Cardiac septum (tissue), 1 donor: ENCODE measurements at regions of chr4 and their contacts with region 1.

Region 1: DNA sequence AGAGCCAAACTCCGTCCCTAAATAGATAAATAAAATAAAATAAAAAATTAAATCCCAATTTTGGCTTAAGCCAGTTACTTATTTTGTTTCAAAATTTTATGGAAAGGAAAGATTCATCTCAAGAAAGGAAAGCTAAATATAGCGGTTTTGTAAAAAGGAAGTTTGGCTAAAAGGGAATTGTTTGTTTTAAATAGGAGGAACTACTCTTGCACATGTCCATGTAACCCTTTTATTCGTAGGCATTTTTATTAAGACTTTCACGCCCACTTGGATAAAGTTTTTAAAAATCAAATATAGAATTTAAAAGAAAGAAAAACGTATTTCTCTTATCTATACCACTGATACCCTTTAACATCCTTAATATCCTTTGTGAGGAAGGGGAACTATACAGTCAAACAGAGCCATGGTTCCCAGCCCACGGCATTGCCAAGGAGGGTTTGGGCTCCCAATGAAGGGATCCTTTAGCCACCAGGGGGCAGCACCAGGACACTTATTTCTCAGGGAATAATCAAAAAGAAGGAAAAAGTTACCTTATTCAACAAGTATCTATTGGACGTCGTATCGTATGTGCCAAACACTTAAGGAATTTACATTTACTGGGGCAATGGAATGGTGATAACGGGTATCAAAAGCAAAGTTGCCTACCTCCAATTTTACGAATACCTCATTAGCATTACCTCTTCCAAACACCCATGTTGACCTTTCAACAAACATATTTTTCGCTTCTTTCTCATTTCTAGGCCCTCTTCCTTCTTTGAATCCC is 27.7 kb downstream of the CDKN2AIP start:
- DNase-seq: peak; percentile 84

Region 2: GRCh38 chr4:183602557-183603027 is 130.5 kb after region 1 on chr4:
- intact Hi-C with region 1: loop called (anchors 1 kb)
- DNase-seq: no peak

Region 3: DNA sequence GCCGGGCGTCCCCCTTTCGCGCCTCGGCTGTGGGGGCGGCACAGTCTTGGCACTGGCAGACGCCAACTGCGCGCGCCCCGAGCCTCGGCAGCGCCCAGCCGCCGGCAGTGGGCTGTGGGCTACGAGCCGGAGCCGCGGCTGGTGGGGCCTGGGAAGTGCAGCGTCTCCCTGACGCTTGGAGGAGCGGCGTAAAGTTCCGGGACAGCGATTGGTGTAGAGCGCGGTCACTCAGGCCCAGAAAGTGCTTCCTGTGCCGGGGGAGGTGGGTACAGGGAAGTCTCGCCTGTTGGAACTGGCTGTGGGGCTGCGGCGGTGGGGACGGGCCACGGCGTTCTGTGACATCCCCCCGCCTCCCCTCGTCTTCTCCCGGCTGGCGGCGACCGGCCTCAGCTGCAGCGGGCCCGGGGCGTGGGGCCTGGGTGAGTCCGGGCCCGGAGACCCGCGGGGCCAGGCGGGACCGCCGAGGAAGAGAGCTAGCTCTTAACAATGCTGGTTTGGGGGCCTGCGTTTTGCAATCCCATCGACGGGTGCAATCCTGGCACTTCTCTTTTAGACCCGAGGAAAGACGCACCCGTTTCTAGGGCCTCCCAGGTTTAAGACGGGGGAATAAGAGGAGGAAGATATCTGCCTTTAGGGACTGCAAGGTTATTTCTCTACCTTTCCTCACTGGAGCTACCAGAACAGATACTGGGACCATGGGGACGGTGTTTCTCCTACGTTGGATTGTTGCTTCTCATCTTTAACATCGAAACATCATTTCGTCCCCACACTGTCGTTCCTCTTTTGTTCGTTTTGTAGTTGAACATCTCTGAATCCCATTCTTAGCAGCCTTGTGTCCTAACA is 187.1 kb after region 1 on chr4 and contains the starts of genes RWDD4 and TRAPPC11:
- intact Hi-C with region 1: loop called (anchors 10 kb)
- DNase-seq: peak; percentile 99
- total RNA-seq, gene RWDD4: 17.5 TPM
- total RNA-seq, gene TRAPPC11: 21.3 TPM